ENCODE measurements at regions of chr1 and their contacts with region 1.

Region 1: DNA sequence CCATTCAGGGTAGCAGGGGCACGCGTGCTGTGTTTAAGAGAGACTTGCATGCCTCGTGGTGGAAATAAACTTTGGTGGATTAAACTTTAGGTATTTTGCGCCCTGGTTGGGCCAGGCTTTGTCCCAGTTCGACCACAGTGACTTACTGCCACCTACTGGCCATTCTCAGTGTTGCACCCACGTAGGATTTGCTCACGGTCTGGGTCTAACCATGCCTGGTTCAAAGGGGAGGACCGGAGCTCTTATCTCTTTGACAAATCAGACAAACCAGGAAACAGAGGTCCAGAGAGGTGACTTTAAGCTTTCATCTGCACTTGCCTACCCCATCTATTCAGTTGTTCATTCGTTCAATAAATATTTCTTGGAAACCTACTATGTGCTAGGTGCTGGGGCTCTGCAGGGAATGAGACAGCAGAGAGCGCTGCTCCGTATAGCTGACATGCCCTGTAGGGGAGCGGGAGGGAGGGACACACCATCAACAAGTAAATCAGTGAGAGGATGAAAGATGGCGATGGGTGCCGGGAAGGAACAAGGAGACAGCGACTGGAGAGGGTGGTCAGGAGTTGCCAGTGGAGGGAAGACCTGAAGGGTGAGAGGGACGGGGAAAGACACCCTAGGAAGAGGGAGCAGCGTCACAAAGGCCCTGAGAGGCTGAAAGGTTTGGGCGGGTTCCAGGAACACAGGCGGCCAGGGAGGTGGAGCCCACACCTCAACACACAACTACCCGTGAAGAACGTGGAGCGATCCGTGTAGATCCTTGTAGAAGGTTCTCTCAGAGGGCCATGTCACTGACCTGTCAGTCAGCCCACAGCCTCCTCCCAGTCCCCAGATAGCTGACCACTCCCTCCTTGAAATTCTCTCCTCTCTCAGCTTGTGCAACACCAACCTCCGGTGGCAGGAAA is 27.2 kb upstream of the TINAGL1 start:
- DNase-seq: peak; percentile 59 to 89 (median 79)
- ATAC-seq: peak; percentile 99
- H3K4me3 ChIP-seq: no peak overlapping the region
- H3K4me3 Mint-ChIP-seq: peak overlapping the region; percentile 36 to 74 (median 60)
- H3K27ac ChIP-seq: no peak overlapping the region
- H3K27ac Mint-ChIP-seq: peak overlapping the region in 3 of 9 donors; percentile 23 to 68 (median 58)
- H3K4me1 ChIP-seq: peaks cover 5 to 7% of the 10 kb centered on the region in 2 donors
- H3K4me1 Mint-ChIP-seq: peaks cover 0 to 13% (median 9%) of the 10 kb centered on the region in 7 donors
- H3K27me3 ChIP-seq: no peaks in the 10 kb centered on the region
- H3K27me3 Mint-ChIP-seq: peaks cover 5 to 15% (median 13%) of the 10 kb centered on the region in 5 donors

Region 2: DNA sequence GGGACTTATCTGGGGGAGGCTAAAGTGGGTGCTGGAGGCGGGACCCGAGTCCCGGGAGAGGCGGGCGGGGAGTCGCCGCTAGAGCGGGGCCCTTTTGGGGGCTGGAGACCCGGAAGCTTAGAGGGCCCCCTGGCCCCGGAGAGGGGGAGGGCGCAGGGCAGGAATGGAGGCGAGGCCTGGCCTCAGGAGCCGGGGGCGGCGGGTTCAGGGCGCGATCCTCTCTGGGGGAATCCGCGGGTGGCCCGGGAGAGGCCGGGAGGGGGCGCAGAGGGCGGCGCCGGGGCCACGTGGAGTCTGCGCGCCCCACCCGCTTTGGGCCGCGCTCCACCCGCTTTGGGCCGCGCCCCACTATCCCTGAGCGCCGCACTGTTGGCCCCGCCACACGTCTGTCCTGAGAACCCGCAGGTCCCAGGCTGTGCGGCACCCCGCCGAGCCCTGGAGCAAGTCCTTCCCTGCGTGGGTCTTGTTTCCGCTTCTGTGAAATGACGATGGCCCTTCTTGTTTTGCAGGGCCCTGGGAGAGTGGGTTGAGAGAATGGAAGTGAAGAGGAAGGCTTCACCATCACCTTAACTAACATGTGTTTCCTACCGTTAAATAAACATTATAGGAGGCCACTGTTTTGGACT is 393.8 kb before region 1 on chr1:
- CTCF ChIA-PET with region 1: no interaction called
- POLR2A ChIA-PET with region 1: no interaction called
- intact Hi-C with region 1: loop called in 1 of 2 experiments (anchors 5 kb)
- DNase-seq: peak; percentile 20 to 82 (median 37)
- ATAC-seq: peak; percentile 81
- H3K4me3 ChIP-seq: peak overlapping the region; percentile 70
- H3K4me3 Mint-ChIP-seq: peak overlapping the region; percentile 84 to 94 (median 90)
- H3K27ac ChIP-seq: peak overlapping the region; percentile 65
- H3K27ac Mint-ChIP-seq: peak overlapping the region; percentile 41 to 86 (median 77)
- H3K4me1 ChIP-seq: peaks cover 5 to 11% of the 10 kb centered on the region in 2 donors
- H3K4me1 Mint-ChIP-seq: peaks cover 4 to 11% (median 10%) of the 10 kb centered on the region in 7 donors
- H3K27me3 ChIP-seq: no peaks in the 10 kb centered on the region
- H3K27me3 Mint-ChIP-seq: no peaks in the 10 kb centered on the region

Region 3: GRCh38 chr1:31182352-31182751 is 366.8 kb before region 1 on chr1:
- CTCF ChIA-PET with region 1: no interaction called
- POLR2A ChIA-PET with region 1: no interaction called
- intact Hi-C with region 1: loop called (anchors 1 to 5 kb)
- DNase-seq: peak in 8 of 9 donors; percentile 21 to 72 (median 32)
- ATAC-seq: peak; percentile 72
- H3K4me3 ChIP-seq: no peak overlapping the region
- H3K4me3 Mint-ChIP-seq: peak overlapping the region in 4 of 10 donors; percentile 17 to 40 (median 28)
- H3K27ac ChIP-seq: no peak overlapping the region
- H3K27ac Mint-ChIP-seq: no peak overlapping the region
- H3K4me1 ChIP-seq: no peaks in the 10 kb centered on the region
- H3K4me1 Mint-ChIP-seq: peaks cover 0 to 10% (median 8%) of the 10 kb centered on the region in 7 donors
- H3K27me3 ChIP-seq: peaks cover 3 to 8% of the 10 kb centered on the region in 2 donors
- H3K27me3 Mint-ChIP-seq: peaks cover 33 to 55% (median 50%) of the 10 kb centered on the region in 5 donors

Region 4: GRCh38 chr1:31422505-31423319 is 126.4 kb before region 1 on chr1:
- CTCF ChIA-PET with region 1: no interaction called
- POLR2A ChIA-PET with region 1: no interaction called
- intact Hi-C with region 1: loop called (anchors 2 kb)
- DNase-seq: peak; percentile 12 to 68 (median 41)
- ATAC-seq: peak; percentile 83
- H3K4me3 ChIP-seq: no peak overlapping the region
- H3K4me3 Mint-ChIP-seq: no peak overlapping the region
- H3K27ac ChIP-seq: no peak overlapping the region
- H3K27ac Mint-ChIP-seq: peak overlapping the region in 1 of 9 donors; percentile 53
- H3K4me1 ChIP-seq: no peaks in the 10 kb centered on the region
- H3K4me1 Mint-ChIP-seq: peaks cover 0 to 5% (median 2%) of the 10 kb centered on the region in 7 donors
- H3K27me3 ChIP-seq: no peaks in the 10 kb centered on the region
- H3K27me3 Mint-ChIP-seq: peaks cover 18 to 40% (median 25%) of the 10 kb centered on the region in 5 donors

Measured in naive thymus-derived CD4-positive, alpha-beta T cell (primary cell).